Heart left ventricle (tissue), 16 donors: ENCODE measurements at regions of chr18 and their contacts with region 1.

Region 1: DNA sequence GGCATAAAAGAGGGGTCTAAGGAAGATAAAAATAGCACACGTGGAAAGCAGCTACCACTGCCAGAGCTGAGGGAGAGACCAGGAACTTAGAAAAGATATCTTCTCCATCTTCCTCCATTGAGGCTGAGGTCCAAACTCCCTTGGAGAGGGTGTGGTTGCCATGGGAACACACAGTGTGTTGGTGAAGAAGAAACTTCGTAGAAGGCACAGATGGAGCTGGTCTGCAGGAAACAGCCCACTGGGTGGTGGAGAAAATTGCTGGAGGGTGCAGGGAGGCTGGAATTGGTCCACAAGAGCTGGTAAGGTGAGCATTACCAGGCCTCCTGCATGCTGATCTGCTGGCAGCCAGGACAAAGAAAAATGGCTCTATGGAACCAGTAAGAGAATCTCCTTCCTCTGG is 191.0 kb downstream of the HRH4 start:
- DNase-seq: no peak
- ATAC-seq: no peak
- H3K4me3 ChIP-seq: no peak overlapping the region
- H3K27ac ChIP-seq: no peak overlapping the region
- H3K4me1 ChIP-seq: peaks cover 0 to 1% (median 0%) of the 10 kb centered on the region in 12 donors
- H3K27me3 ChIP-seq: no peaks in the 10 kb centered on the region
- CTCF ChIP-seq: no peak
- POLR2A ChIP-seq: no peak

Region 2: GRCh38 chr18:24672165-24672941 is 20.9 kb after region 1 on chr18:
- intact Hi-C with region 1: loop called in 1 of 10 experiments (anchors 2 kb)
- DNase-seq: no peak
- ATAC-seq: no peak
- H3K4me3 ChIP-seq: no peak overlapping the region
- H3K27ac ChIP-seq: no peak overlapping the region
- H3K4me1 ChIP-seq: no peaks in the 10 kb centered on the region
- H3K27me3 ChIP-seq: no peaks in the 10 kb centered on the region
- CTCF ChIP-seq: peak in 6 of 12 donors; percentile 8 to 37 (median 24)
- POLR2A ChIP-seq: no peak

Region 3: GRCh38 chr18:24695168-24695567 is 43.7 kb after region 1 on chr18:
- intact Hi-C with region 1: loop called in 1 of 10 experiments (anchors 5 kb)
- DNase-seq: no peak
- ATAC-seq: no peak
- H3K4me3 ChIP-seq: no peak overlapping the region
- H3K27ac ChIP-seq: no peak overlapping the region
- H3K4me1 ChIP-seq: no peaks in the 10 kb centered on the region
- H3K27me3 ChIP-seq: no peaks in the 10 kb centered on the region
- CTCF ChIP-seq: no peak
- POLR2A ChIP-seq: no peak

Region 4: GRCh38 chr18:24710474-24710873 is 59.0 kb after region 1 on chr18:
- intact Hi-C with region 1: no loop called
- DNase-seq: no peak
- ATAC-seq: no peak
- H3K4me3 ChIP-seq: no peak overlapping the region
- H3K27ac ChIP-seq: no peak overlapping the region
- H3K4me1 ChIP-seq: no peaks in the 10 kb centered on the region
- H3K27me3 ChIP-seq: no peaks in the 10 kb centered on the region
- CTCF ChIP-seq: no peak
- POLR2A ChIP-seq: no peak